ENCODE measurements at regions of chr20 and their contacts with region 1.

Region 1: GRCh38 chr20:50958615-50959542 is at the start of gene MOCS3:
- DNase-seq: peak; percentile 92
- H3K27ac ChIP-seq: peak within 1 kb of the TSS; percentile 80
- CTCF ChIP-seq: no peak

Region 2: GRCh38 chr20:50885781-50886486 is 72.9 kb before region 1 on chr20:
- CTCF ChIA-PET with region 1: no interaction called
- POLR2A ChIA-PET with region 1: no interaction called
- DNase-seq: no peak
- H3K27ac ChIP-seq: peak overlapping the region; percentile 21
- CTCF ChIP-seq: no peak

Region 3: GRCh38 chr20:50929299-50930138 is 29.4 kb before region 1 on chr20:
- CTCF ChIA-PET with region 1: interaction called, 7 read pairs
- POLR2A ChIA-PET with region 1: interaction called, 10 read pairs
- DNase-seq: peak; percentile 90
- H3K27ac ChIP-seq: peak overlapping the region; percentile 96
- CTCF ChIP-seq: peak; percentile 95

Region 4: DNA sequence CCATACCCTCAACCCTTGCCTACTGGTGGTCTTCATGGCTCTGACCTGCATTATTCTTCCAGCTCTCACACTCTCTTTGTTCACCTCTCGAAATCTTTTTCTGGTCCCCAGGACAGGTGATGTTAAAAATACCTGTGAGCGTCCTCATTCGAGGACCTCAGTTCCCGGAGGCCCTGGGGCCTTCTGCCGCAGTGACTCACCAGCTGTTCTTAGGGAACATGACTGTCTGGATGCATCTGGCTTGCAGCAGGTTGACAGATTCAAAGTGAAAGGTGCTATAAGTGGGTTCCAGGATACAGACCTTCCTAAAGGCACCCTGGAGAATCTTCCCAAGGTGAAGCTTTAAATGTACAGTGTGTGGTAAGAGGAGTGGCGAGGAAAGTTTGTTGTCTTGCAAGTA is 274.5 kb after region 1 on chr20:
- CTCF ChIA-PET with region 1: no interaction called
- POLR2A ChIA-PET with region 1: no interaction called
- DNase-seq: peak; percentile 76
- H3K27ac ChIP-seq: no peak overlapping the region
- CTCF ChIP-seq: no peak

Region 5: DNA sequence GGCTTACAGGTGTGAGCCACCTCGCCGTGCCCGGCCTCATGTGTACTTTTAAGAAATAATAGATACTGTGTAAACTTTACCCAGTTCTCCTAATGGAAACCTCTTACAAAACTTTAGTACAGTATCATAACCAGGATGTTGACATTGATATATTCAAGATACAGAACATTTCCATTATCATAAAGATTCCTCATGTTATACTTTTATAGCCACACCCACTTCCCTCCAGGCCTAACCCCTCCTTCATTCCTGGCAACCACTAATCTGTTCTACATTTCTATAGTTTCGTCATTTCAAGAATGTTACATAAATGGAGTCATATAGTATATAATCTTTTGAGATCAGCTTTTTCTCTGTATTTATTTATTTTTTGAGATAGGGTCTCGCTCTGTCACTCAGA is 896.0 kb after region 1 on chr20:
- CTCF ChIA-PET with region 1: no interaction called
- POLR2A ChIA-PET with region 1: no interaction called
- DNase-seq: peak; percentile 41
- H3K27ac ChIP-seq: no peak overlapping the region
- CTCF ChIP-seq: no peak